Breast epithelium (tissue), 4 donors: ENCODE measurements at regions of chr3 and their contacts with region 1.

Region 1: GRCh38 chr3:137761197-137762127 is 2.7 kb upstream of the SOX14 start:
- DNase-seq: no peak
- H3K4me3 ChIP-seq: no peak overlapping the region
- H3K27ac ChIP-seq: no peak overlapping the region
- H3K4me1 ChIP-seq: peaks cover 0 to 6% of the 10 kb centered on the region in 2 donors
- H3K27me3 ChIP-seq: peaks cover 4 to 82% of the 10 kb centered on the region in 2 donors
- CTCF ChIP-seq: no peak
- POLR2A ChIP-seq: no peak

Region 2: GRCh38 chr3:137477614-137478013 is 283.8 kb before region 1 on chr3:
- intact Hi-C with region 1: no loop called
- DNase-seq: no peak
- H3K4me3 ChIP-seq: no peak overlapping the region
- H3K27ac ChIP-seq: no peak overlapping the region
- H3K4me1 ChIP-seq: no peaks in the 10 kb centered on the region
- H3K27me3 ChIP-seq: no peaks in the 10 kb centered on the region
- CTCF ChIP-seq: no peak
- POLR2A ChIP-seq: no peak

Region 3: DNA sequence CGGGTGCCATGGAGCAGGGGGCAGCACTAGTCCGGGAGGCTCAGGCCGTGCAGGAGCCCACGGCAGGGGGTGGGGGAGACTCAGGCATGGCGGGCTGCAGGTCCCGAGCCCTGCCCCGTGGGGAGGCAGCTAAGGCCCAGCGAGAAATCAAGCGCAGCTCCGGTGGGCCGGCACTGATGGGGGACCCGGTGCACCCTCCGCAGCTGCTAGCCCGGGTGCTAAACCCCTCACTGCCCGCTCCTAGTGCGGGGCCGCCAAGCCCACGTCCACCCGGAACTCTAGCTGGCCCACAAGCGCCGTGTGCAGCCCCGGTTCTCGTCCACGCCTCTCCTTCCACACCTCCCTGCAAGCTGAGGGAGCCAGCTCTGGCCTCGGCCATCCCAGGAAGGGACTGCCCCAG is 46.9 kb before region 1 on chr3:
- intact Hi-C with region 1: no loop called
- DNase-seq: no peak
- H3K4me3 ChIP-seq: no peak overlapping the region
- H3K27ac ChIP-seq: no peak overlapping the region
- H3K4me1 ChIP-seq: no peaks in the 10 kb centered on the region
- H3K27me3 ChIP-seq: no peaks in the 10 kb centered on the region
- CTCF ChIP-seq: no peak
- POLR2A ChIP-seq: no peak

Region 4: DNA sequence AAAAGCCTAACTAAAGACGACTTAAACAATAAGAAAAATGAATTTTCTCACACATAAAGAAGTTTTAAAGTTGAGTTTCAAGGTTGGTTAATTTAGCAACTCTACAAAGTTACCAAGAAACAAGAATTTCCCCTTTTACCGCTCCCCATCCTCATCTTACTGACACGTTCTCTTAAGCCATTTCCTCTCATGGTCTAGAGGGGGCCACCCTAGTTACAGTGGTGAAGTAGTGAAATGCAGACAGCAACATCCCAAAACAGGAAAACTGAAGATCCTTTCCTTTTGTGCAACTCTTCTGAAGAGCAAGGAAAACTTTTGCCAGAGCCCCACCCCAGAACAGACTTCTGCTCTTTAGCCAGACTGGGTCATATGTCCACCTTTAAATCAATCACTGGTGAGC is 14.7 kb before region 1 on chr3:
- intact Hi-C with region 1: loop called (anchors 1 kb)
- DNase-seq: no peak
- H3K4me3 ChIP-seq: no peak overlapping the region
- H3K27ac ChIP-seq: no peak overlapping the region
- H3K4me1 ChIP-seq: no peaks in the 10 kb centered on the region
- H3K27me3 ChIP-seq: peaks cover 0 to 32% of the 10 kb centered on the region in 2 donors
- CTCF ChIP-seq: no peak
- POLR2A ChIP-seq: no peak

Region 5: DNA sequence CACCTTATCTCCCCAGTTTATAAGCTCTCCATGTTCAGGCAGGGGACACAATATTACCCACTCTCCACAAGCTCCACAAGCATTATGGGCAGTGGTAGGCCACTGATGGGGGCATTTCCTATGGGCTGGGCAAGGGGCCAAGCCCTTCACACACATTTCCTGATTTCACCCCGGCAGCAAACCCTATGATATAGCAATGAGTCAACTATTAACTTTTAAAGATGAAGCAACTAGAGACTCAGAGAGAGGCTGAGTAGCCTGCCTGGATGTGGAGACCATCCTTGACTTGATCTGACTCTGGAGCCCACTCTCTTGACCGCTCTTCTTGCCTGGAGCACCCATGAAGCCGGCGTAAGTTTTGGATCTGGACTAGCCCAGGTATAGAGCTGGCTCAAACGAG is 1213.0 kb after region 1 on chr3:
- intact Hi-C with region 1: no loop called
- DNase-seq: no peak
- H3K4me3 ChIP-seq: no peak overlapping the region
- H3K27ac ChIP-seq: no peak overlapping the region
- H3K4me1 ChIP-seq: no peaks in the 10 kb centered on the region
- H3K27me3 ChIP-seq: peaks cover 0 to 4% of the 10 kb centered on the region in 2 donors
- CTCF ChIP-seq: no peak
- POLR2A ChIP-seq: no peak